CD14-positive monocyte (primary cell): ENCODE measurements at regions of chr22 and their contacts with region 1.

Region 1: GRCh38 chr22:41403532-41404318 is 22.0 kb downstream of the TEF start:
- DNase-seq: peak; percentile 87 to 92 (median 90)
- H3K4me3 ChIP-seq: no peak overlapping the region
- H3K4me3 Mint-ChIP-seq: no peak overlapping the region
- H3K27ac ChIP-seq: no peak overlapping the region
- H3K27ac Mint-ChIP-seq: no peak overlapping the region
- H3K4me1 ChIP-seq: no peaks in the 10 kb centered on the region
- H3K4me1 Mint-ChIP-seq: peaks cover 10% of the 10 kb centered on the region
- H3K27me3 ChIP-seq: no peaks in the 10 kb centered on the region
- H3K27me3 Mint-ChIP-seq: peaks cover 3 to 6% (median 3%) of the 10 kb centered on the region in 3 donors
- CTCF ChIP-seq: peak; percentile 89

Region 2: GRCh38 chr22:41517172-41518047 is 113.7 kb after region 1 on chr22:
- intact Hi-C with region 1: loop called (anchors 2 kb)
- DNase-seq: peak in 2 of 3 donors; percentile 27 to 31
- H3K4me3 ChIP-seq: no peak overlapping the region
- H3K4me3 Mint-ChIP-seq: no peak overlapping the region
- H3K27ac ChIP-seq: no peak overlapping the region
- H3K27ac Mint-ChIP-seq: no peak overlapping the region
- H3K4me1 ChIP-seq: no peaks in the 10 kb centered on the region
- H3K4me1 Mint-ChIP-seq: no peaks in the 10 kb centered on the region
- H3K27me3 ChIP-seq: no peaks in the 10 kb centered on the region
- H3K27me3 Mint-ChIP-seq: no peaks in the 10 kb centered on the region
- CTCF ChIP-seq: peak; percentile 86

Region 3: DNA sequence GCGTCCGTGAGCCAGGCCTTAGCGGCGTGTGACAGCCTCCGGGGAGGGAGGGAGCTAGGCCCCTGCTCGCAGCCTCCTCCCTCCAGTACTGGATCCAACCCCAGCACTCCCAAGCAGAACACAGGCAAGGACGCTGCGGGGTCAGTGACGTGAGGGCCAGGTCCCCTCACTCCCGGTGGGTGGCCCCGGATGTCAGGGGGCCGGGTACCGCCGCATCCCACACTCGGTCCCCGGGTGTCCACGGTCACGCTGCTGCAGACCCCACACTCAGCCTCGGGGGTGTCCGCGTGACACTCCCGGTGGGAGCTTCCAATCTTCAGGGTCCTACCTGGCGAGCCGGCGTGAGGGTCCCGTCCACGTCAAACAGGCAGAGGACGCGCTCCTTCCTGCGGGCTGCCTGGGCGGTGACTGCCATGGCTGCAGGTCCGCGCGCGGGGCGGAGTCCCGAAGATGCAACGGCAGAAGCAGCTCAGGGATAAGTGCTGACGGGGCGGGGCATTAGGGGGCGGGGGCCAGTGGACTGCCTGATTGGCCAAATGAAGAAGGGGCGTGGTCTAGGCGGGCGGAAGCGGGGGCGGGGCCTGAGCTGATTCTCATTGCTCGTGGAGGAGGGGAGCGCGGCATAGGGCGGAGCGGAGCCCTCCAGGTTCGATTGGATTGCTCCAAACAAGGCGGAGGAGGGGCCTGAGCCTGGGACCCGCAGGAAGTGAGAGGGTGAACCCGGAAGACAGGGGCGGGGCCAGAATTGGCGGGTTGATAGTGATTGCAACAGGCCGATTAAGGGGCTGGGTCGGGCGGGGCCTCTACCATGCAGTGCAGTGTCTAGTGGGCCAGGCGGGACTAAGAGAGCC is 185.9 kb after region 1 on chr22 and contains the start of gene PMM1:
- intact Hi-C with region 1: loop called in 1 of 2 experiments (anchors 10 kb)
- DNase-seq: peak; percentile 100
- H3K4me3 ChIP-seq: peak within 1 kb of the TSS; percentile 69 to 94 (median 71)
- H3K4me3 Mint-ChIP-seq: peak within 1 kb of the TSS; percentile 88 to 93
- H3K27ac ChIP-seq: peak within 1 kb of the TSS in 1 of 2 donors; percentile 82
- H3K27ac Mint-ChIP-seq: peak within 1 kb of the TSS; percentile 60 to 90 (median 80)
- H3K4me1 ChIP-seq: peaks cover 17 to 19% of the 10 kb centered on the region in 2 donors
- H3K4me1 Mint-ChIP-seq: peaks cover 12% of the 10 kb centered on the region
- H3K27me3 ChIP-seq: no peaks in the 10 kb centered on the region
- H3K27me3 Mint-ChIP-seq: peaks cover 1 to 4% (median 2%) of the 10 kb centered on the region in 3 donors
- CTCF ChIP-seq: no peak
- polyA plus RNA-seq, gene PMM1: 15.6 to 32.4 (median 23.5) TPM